Left cardiac atrium (tissue), 4 donors: ENCODE measurements at regions of chr1 and their contacts with region 1.

Region 1: DNA sequence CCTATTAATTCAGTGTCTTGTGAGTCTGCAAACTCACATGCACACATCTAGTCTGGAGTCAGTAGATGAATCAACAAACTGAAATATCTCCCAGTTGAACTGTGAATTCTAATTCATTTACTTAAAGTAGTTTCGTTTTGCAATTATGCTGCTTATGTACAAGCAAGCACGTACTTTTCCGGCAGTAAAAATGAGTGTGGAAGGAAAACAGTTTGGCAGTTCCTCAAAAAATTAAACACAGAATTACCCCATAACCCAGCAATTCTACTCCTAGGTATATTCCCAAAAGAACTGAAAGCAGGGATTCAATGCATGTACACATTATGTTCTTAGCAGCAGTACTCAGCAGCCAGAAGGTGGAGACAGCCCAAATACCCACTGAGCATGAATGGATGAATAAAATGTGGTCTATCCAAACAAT is 49.3 kb downstream of the GNB1 start:
- DNase-seq: no peak
- ATAC-seq: no peak

Region 2: GRCh38 chr1:1883092-1883873 is 41.7 kb after region 1 on chr1:
- intact Hi-C with region 1: loop called (anchors 5 to 10 kb)
- DNase-seq: no peak
- ATAC-seq: peak; percentile 12 to 29

Region 3: GRCh38 chr1:2044510-2045319 is 203.1 kb after region 1 on chr1:
- intact Hi-C with region 1: no loop called
- DNase-seq: peak; percentile 69
- ATAC-seq: peak; percentile 77 to 83